CD14-positive monocyte (primary cell): ENCODE measurements at regions of chr15 and their contacts with region 1.

Region 1: DNA sequence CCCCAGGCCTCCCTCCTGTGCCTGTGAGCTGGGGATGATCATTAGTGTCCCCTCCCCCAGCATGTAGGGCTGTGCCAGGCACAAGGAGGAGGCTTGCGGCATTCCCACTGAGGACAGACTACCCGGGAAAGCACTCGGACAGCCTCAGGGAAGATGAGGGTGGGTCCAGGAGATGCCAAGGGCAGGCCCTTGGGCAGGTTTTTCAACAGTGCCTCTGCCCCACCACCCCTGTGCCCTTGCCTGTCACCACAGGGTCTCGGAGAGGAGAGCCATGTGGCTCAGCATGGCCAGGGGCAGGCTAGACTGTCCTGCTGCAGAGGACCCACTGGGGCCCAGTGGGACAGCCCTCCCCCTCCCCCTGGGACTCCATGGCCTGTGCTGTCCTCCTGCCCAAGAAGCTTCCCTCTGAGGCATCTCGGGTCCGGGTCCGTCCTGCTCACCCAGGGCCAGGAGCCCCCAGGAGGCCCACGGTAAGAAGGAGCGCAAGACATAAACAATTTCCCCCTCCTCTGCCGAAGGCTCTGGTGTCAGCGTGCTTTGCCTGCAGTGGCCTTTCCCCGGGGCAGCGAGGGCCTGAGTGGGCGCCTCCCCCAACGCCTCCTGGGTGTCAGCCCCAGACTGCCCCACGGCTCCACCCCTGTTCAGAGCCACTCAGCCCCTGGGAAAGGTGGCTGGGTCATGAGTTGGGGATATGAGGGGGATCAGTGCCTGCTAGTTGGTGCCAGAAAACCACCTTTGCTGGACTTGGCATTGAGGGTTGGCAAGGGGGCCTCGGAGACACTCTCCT is 192.4 kb downstream of the GOLGA6L6 start:
- DNase-seq: peak in 1 of 3 donors; percentile 14
- H3K4me3 ChIP-seq: no peak overlapping the region
- H3K4me3 Mint-ChIP-seq: no peak overlapping the region
- H3K27ac ChIP-seq: no peak overlapping the region
- H3K27ac Mint-ChIP-seq: no peak overlapping the region
- H3K4me1 ChIP-seq: no peaks in the 10 kb centered on the region
- H3K4me1 Mint-ChIP-seq: no peaks in the 10 kb centered on the region
- H3K27me3 ChIP-seq: no peaks in the 10 kb centered on the region
- H3K27me3 Mint-ChIP-seq: peaks cover 0 to 1% (median 0%) of the 10 kb centered on the region in 3 donors
- CTCF ChIP-seq: no peak

Region 2: GRCh38 chr15:20310603-20311002 is 38.6 kb before region 1 on chr15:
- intact Hi-C with region 1: no loop called
- DNase-seq: no peak
- H3K4me3 ChIP-seq: no peak overlapping the region
- H3K4me3 Mint-ChIP-seq: no peak overlapping the region
- H3K27ac ChIP-seq: no peak overlapping the region
- H3K27ac Mint-ChIP-seq: no peak overlapping the region
- H3K4me1 ChIP-seq: no peaks in the 10 kb centered on the region
- H3K4me1 Mint-ChIP-seq: no peaks in the 10 kb centered on the region
- H3K27me3 ChIP-seq: no peaks in the 10 kb centered on the region
- H3K27me3 Mint-ChIP-seq: no peaks in the 10 kb centered on the region
- CTCF ChIP-seq: peak; percentile 29

Region 3: DNA sequence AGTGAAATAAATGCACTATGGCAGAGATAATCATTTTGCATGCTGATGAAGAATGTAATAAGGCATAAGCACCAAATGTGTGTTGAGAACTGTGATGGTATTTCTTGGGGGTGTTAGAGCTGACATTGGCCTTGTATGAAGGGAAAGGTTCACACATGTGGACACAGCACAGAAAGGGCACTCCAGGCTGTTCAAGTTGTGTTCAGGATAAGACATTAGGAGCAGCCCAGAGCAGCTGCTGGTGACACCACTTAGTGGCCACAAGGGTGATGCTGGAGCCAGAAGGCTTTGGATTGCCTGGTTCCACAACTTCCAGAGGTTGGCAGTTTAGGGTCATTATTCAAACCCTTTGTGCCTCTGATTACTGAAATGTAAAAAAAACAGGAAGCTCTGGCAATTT is 37.0 kb after region 1 on chr15:
- intact Hi-C with region 1: loop called in 1 of 2 experiments (anchors 5 kb)
- DNase-seq: no peak
- H3K4me3 ChIP-seq: no peak overlapping the region
- H3K4me3 Mint-ChIP-seq: no peak overlapping the region
- H3K27ac ChIP-seq: no peak overlapping the region
- H3K27ac Mint-ChIP-seq: no peak overlapping the region
- H3K4me1 ChIP-seq: no peaks in the 10 kb centered on the region
- H3K4me1 Mint-ChIP-seq: no peaks in the 10 kb centered on the region
- H3K27me3 ChIP-seq: no peaks in the 10 kb centered on the region
- H3K27me3 Mint-ChIP-seq: no peaks in the 10 kb centered on the region
- CTCF ChIP-seq: no peak